ENCODE measurements at regions of chr11 and their contacts with region 1.

Region 1: DNA sequence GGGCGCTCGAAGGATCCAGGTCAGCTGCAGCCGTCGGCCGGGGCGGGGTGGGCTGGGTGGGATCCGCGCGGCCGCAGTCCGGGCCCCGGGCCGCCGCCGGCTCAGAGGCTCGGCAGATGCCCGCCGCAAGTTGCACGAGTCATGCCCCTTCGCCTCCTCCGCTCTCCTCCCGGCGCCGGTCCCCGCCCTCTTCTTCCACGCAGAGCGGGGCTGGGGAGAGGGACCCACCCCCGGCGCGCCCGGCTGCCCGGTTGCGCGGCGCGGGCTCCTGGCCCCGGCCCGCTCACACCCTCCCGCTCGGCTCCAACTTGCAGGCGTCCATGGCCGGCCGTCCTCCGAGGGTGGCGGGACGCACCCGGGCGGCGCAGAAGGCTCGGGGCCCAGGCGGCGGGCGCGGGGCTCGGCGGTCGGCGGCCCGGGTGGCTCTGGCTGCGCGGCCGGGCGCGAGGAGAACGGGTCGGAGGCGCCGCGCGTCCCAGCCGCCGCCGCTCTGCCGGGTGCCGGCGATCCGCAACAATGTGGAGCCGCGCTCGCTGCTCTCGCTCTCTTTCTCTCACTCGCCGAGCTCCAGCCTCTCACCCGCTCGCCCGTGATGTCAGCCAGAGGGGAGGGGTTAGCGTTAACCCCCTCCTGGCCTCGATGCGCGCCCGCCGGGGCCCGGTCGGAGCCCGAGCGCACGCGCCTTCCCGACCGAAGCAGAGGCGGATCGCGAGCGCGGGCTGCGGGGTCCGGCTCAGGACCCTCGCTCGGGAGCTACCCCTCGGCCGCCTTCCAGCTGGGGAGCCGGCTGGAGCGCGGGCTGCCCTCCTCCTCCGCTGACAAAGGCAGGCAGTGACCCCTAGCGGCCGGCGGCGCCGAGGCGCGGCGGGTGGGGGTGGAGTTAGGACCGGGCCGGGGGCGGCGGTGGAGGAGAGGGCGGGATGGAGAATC is at the start of gene NECTIN1:
- DNase-seq: peak; percentile 75 to 93 (median 85)
- ATAC-seq: peak; percentile 93
- H3K4me3 ChIP-seq: peak within 1 kb of the TSS; percentile 69
- H3K4me3 Mint-ChIP-seq: peak within 1 kb of the TSS; percentile 87 to 97 (median 94)
- H3K27ac ChIP-seq: peak within 1 kb of the TSS; percentile 58
- H3K27ac Mint-ChIP-seq: peak within 1 kb of the TSS; percentile 34 to 87 (median 67)
- H3K4me1 ChIP-seq: peaks cover 17 to 21% of the 10 kb centered on the region in 2 donors
- H3K4me1 Mint-ChIP-seq: peaks cover 0 to 17% (median 13%) of the 10 kb centered on the region in 7 donors
- H3K27me3 ChIP-seq: peaks cover 0 to 4% of the 10 kb centered on the region in 2 donors
- H3K27me3 Mint-ChIP-seq: peaks cover 8 to 73% (median 17%) of the 10 kb centered on the region in 5 donors
- total RNA-seq, gene NECTIN1: 0.87 to 4.2 (median 2.4) TPM

Region 2: GRCh38 chr11:119356349-119357031 is 372.4 kb before region 1 on chr11:
- CTCF ChIA-PET with region 1: no interaction called
- POLR2A ChIA-PET with region 1: no interaction called
- intact Hi-C with region 1: loop called (anchors 1 kb)
- DNase-seq: peak; percentile 49 to 82 (median 70)
- ATAC-seq: peak; percentile 94
- H3K4me3 ChIP-seq: peak overlapping the region; percentile 82
- H3K4me3 Mint-ChIP-seq: peak overlapping the region; percentile 81 to 96 (median 93)
- H3K27ac ChIP-seq: peak overlapping the region; percentile 48
- H3K27ac Mint-ChIP-seq: peak overlapping the region in 7 of 9 donors; percentile 38 to 93 (median 68)
- H3K4me1 ChIP-seq: no peaks in the 10 kb centered on the region
- H3K4me1 Mint-ChIP-seq: peaks cover 0 to 16% (median 5%) of the 10 kb centered on the region in 7 donors
- H3K27me3 ChIP-seq: no peaks in the 10 kb centered on the region
- H3K27me3 Mint-ChIP-seq: peaks cover 12 to 59% (median 29%) of the 10 kb centered on the region in 5 donors

Region 3: DNA sequence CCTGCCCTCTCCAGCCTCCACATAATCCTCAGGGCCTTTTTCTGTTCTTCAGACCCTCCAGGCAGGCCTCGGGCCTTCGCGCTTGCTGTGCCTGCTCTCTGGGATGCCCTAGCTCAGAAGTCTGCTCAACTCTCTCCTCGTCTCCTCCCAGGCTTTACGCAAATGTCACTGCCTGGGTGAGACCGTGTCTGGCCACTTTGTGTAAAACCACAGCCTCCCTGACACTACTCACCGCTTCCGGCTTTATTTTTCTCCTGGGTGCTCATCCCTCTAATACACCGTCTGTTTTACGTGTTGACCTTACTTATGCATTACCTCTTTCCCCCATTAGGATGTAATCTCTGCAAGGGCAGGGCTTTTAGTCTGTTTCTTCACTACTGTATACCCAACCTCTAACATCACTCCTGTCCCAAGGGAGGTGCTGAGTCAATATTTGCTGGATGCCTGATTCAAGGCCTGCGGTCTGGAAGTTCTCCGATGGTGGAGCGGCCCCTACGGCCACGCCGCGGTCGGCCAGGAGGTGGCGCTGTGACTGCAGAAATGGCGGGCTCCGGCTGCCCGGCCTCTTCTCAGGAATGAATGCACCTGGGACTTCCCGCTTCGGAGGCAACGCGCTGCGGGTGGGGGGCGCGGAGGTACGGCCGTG is 247.8 kb before region 1 on chr11:
- CTCF ChIA-PET with region 1: interaction called, 3 read pairs
- POLR2A ChIA-PET with region 1: no interaction called
- intact Hi-C with region 1: loop called in 1 of 2 experiments (anchors 1 kb)
- DNase-seq: peak in 8 of 9 donors; percentile 14 to 88 (median 52)
- ATAC-seq: peak; percentile 73
- H3K4me3 ChIP-seq: no peak overlapping the region
- H3K4me3 Mint-ChIP-seq: no peak overlapping the region
- H3K27ac ChIP-seq: no peak overlapping the region
- H3K27ac Mint-ChIP-seq: peak overlapping the region in 1 of 9 donors; percentile 58
- H3K4me1 ChIP-seq: no peaks in the 10 kb centered on the region
- H3K4me1 Mint-ChIP-seq: peaks cover 0 to 1% (median 0%) of the 10 kb centered on the region in 7 donors
- H3K27me3 ChIP-seq: no peaks in the 10 kb centered on the region
- H3K27me3 Mint-ChIP-seq: peaks cover 2 to 28% (median 25%) of the 10 kb centered on the region in 5 donors

Region 4: GRCh38 chr11:119641983-119642745 is 86.8 kb before region 1 on chr11:
- CTCF ChIA-PET with region 1: interaction called, 5 read pairs
- POLR2A ChIA-PET with region 1: no interaction called
- intact Hi-C with region 1: loop called (anchors 1 kb)
- DNase-seq: peak in 2 of 9 donors; percentile 8 to 22
- ATAC-seq: no peak
- H3K4me3 ChIP-seq: no peak overlapping the region
- H3K4me3 Mint-ChIP-seq: no peak overlapping the region
- H3K27ac ChIP-seq: no peak overlapping the region
- H3K27ac Mint-ChIP-seq: no peak overlapping the region
- H3K4me1 ChIP-seq: no peaks in the 10 kb centered on the region
- H3K4me1 Mint-ChIP-seq: no peaks in the 10 kb centered on the region
- H3K27me3 ChIP-seq: no peaks in the 10 kb centered on the region
- H3K27me3 Mint-ChIP-seq: peaks cover 0 to 10% (median 2%) of the 10 kb centered on the region in 5 donors

Region 5: DNA sequence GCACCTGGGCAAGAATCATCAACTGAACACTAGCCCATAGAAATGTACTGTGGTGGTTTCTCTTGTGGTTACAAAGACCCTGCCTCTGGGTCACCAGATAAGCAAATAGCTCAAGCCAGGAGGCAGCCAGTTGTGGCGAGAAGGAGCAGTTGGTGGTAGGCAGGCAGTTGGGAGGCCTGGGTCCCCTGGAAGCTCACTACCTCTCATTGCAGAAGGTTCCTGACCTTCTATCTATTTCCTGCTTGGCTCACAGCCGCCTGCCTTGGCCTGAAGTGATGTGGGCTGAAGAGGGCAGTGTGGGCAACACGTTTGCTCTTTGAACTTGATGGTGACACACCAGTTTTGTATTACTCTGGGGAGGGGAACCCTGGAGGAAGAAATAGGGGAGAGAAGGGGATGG is 34.6 kb before region 1 on chr11:
- CTCF ChIA-PET with region 1: interaction called, 4 read pairs
- POLR2A ChIA-PET with region 1: no interaction called
- intact Hi-C with region 1: loop called in 1 of 2 experiments (anchors 5 kb)
- DNase-seq: no peak
- ATAC-seq: no peak
- H3K4me3 ChIP-seq: no peak overlapping the region
- H3K4me3 Mint-ChIP-seq: no peak overlapping the region
- H3K27ac ChIP-seq: no peak overlapping the region
- H3K27ac Mint-ChIP-seq: peak overlapping the region in 2 of 9 donors; percentile 66 to 69
- H3K4me1 ChIP-seq: peaks cover 7% of the 10 kb centered on the region in 2 donors
- H3K4me1 Mint-ChIP-seq: peaks cover 6 to 38% (median 18%) of the 10 kb centered on the region in 7 donors
- H3K27me3 ChIP-seq: no peaks in the 10 kb centered on the region
- H3K27me3 Mint-ChIP-seq: peaks cover 0 to 4% (median 0%) of the 10 kb centered on the region in 5 donors

Region 6: DNA sequence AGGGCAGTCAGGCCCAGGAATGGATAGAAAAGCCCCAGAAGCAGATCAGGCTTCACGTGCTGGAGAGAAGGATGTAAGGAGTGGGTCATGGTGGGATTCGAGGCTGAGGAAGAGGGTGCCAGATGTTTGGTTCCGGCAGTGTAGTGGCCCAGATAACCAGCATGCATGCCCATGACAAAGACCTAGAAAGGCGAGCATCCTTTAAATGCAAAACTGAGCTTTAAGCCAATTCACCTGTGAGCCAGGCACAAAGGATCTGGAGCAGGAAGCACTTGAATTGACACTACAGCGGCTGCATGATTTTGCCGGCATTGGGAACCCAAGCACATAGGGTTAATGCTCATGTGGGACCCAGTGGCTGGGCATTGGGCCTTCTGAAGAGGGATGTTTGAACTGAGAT is 223.5 kb after region 1 on chr11:
- CTCF ChIA-PET with region 1: no interaction called
- POLR2A ChIA-PET with region 1: no interaction called
- intact Hi-C with region 1: no loop called
- DNase-seq: no peak
- ATAC-seq: no peak
- H3K4me3 ChIP-seq: no peak overlapping the region
- H3K4me3 Mint-ChIP-seq: no peak overlapping the region
- H3K27ac ChIP-seq: no peak overlapping the region
- H3K27ac Mint-ChIP-seq: no peak overlapping the region
- H3K4me1 ChIP-seq: no peaks in the 10 kb centered on the region
- H3K4me1 Mint-ChIP-seq: no peaks in the 10 kb centered on the region
- H3K27me3 ChIP-seq: no peaks in the 10 kb centered on the region
- H3K27me3 Mint-ChIP-seq: peaks cover 14 to 59% (median 40%) of the 10 kb centered on the region in 5 donors

Region 7: GRCh38 chr11:120210626-120211521 is 482.0 kb after region 1 on chr11 and contains the start of gene OAF:
- CTCF ChIA-PET with region 1: no interaction called
- POLR2A ChIA-PET with region 1: no interaction called
- intact Hi-C with region 1: loop called (anchors 1 to 2 kb)
- DNase-seq: peak; percentile 49 to 77 (median 69)
- ATAC-seq: peak; percentile 85
- H3K4me3 ChIP-seq: peak within 1 kb of the TSS; percentile 80
- H3K4me3 Mint-ChIP-seq: peak within 1 kb of the TSS; percentile 93 to 99 (median 96)
- H3K27ac ChIP-seq: peak within 1 kb of the TSS; percentile 46
- H3K27ac Mint-ChIP-seq: peak within 1 kb of the TSS; percentile 83 to 96 (median 86)
- H3K4me1 ChIP-seq: peaks cover 0 to 8% of the 10 kb centered on the region in 2 donors
- H3K4me1 Mint-ChIP-seq: peaks cover 11 to 27% (median 18%) of the 10 kb centered on the region in 7 donors
- H3K27me3 ChIP-seq: no peaks in the 10 kb centered on the region
- H3K27me3 Mint-ChIP-seq: peaks cover 0 to 70% (median 13%) of the 10 kb centered on the region in 5 donors
- total RNA-seq, gene OAF: 3.4 to 21.2 (median 4.6) TPM

Measured in naive thymus-derived CD4-positive, alpha-beta T cell (primary cell).